T-cell (primary cell): ENCODE measurements at regions of chr10 and their contacts with region 1.

Region 1: GRCh38 chr10:74371696-74372095 is 220.7 kb downstream of the ADK start:
- DNase-seq: no peak
- ATAC-seq: no peak
- H3K4me3 ChIP-seq: no peak overlapping the region
- H3K4me3 Mint-ChIP-seq: no peak overlapping the region
- H3K27ac ChIP-seq: no peak overlapping the region
- H3K27ac Mint-ChIP-seq: no peak overlapping the region
- H3K4me1 ChIP-seq: no peaks in the 10 kb centered on the region
- H3K4me1 Mint-ChIP-seq: peaks cover 0 to 7% (median 3%) of the 10 kb centered on the region in 3 donors
- H3K27me3 ChIP-seq: no peaks in the 10 kb centered on the region
- H3K27me3 Mint-ChIP-seq: no peaks in the 10 kb centered on the region

Region 2: GRCh38 chr10:74118804-74119203 is 252.9 kb before region 1 on chr10:
- CTCF ChIA-PET with region 1: no interaction called
- POLR2A ChIA-PET with region 1: no interaction called
- DNase-seq: no peak
- ATAC-seq: no peak
- H3K4me3 ChIP-seq: no peak overlapping the region
- H3K4me3 Mint-ChIP-seq: no peak overlapping the region
- H3K27ac ChIP-seq: peak overlapping the region; percentile 1
- H3K27ac Mint-ChIP-seq: peak overlapping the region; percentile 74 to 80
- H3K4me1 ChIP-seq: no peaks in the 10 kb centered on the region
- H3K4me1 Mint-ChIP-seq: peaks cover 2 to 17% (median 6%) of the 10 kb centered on the region in 3 donors
- H3K27me3 ChIP-seq: no peaks in the 10 kb centered on the region
- H3K27me3 Mint-ChIP-seq: no peaks in the 10 kb centered on the region

Region 3: DNA sequence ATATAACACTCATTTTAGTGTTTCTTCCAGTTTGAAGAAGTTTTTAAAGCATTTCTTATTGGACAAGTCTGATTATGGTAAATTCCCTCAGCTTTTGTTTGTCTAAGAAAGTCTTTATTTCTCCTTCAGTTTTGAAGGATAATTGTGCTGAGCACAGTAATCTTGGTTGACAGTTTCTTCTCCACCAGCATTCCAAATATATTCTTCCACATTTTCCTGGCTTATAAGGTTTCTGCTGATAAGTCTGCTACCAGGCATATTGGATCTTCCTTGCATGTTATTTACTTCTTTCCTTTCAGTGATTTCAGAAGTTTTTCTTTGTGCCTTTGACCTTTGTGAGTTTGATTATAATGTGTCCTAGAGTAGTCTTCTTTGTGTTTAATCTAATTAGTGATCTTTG is 10.0 kb before region 1 on chr10:
- CTCF ChIA-PET with region 1: no interaction called
- POLR2A ChIA-PET with region 1: no interaction called
- DNase-seq: no peak
- ATAC-seq: no peak
- H3K4me3 ChIP-seq: no peak overlapping the region
- H3K4me3 Mint-ChIP-seq: no peak overlapping the region
- H3K27ac ChIP-seq: no peak overlapping the region
- H3K27ac Mint-ChIP-seq: no peak overlapping the region
- H3K4me1 ChIP-seq: no peaks in the 10 kb centered on the region
- H3K4me1 Mint-ChIP-seq: peaks cover 0 to 7% (median 5%) of the 10 kb centered on the region in 3 donors
- H3K27me3 ChIP-seq: no peaks in the 10 kb centered on the region
- H3K27me3 Mint-ChIP-seq: no peaks in the 10 kb centered on the region

Region 4: GRCh38 chr10:74406006-74406405 is 34.3 kb after region 1 on chr10:
- CTCF ChIA-PET with region 1: no interaction called
- POLR2A ChIA-PET with region 1: no interaction called
- DNase-seq: no peak
- ATAC-seq: no peak
- H3K4me3 ChIP-seq: no peak overlapping the region
- H3K4me3 Mint-ChIP-seq: no peak overlapping the region
- H3K27ac ChIP-seq: no peak overlapping the region
- H3K27ac Mint-ChIP-seq: no peak overlapping the region
- H3K4me1 ChIP-seq: no peaks in the 10 kb centered on the region
- H3K4me1 Mint-ChIP-seq: peaks cover 0 to 5% (median 0%) of the 10 kb centered on the region in 3 donors
- H3K27me3 ChIP-seq: no peaks in the 10 kb centered on the region
- H3K27me3 Mint-ChIP-seq: no peaks in the 10 kb centered on the region

Region 5: DNA sequence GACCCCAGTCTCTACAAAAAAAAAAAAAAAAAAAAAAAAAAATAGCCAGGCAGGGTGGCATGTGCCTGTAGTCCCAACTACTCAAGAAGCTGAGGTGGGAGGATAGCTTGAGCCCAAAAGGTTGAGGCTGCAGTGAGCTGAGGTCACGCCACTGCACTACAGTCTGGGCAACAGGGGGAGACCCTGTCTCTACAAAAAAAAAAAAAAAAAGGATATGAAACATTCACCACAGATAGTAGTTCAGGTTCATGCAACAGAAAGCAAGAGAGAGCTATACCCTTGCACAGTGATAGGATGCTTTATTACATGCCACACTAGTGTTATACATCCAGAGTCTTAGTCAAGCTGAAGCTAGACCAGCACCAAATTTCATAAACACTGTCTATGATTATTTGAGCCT is 306.3 kb after region 1 on chr10:
- CTCF ChIA-PET with region 1: no interaction called
- POLR2A ChIA-PET with region 1: interaction called in 1 of 2 experiments, 11 read pairs
- DNase-seq: no peak
- ATAC-seq: no peak
- H3K4me3 ChIP-seq: no peak overlapping the region
- H3K4me3 Mint-ChIP-seq: no peak overlapping the region
- H3K27ac ChIP-seq: no peak overlapping the region
- H3K27ac Mint-ChIP-seq: no peak overlapping the region
- H3K4me1 ChIP-seq: peaks cover 0 to 4% of the 10 kb centered on the region in 2 experiments
- H3K4me1 Mint-ChIP-seq: peaks cover 17 to 27% (median 22%) of the 10 kb centered on the region in 3 donors
- H3K27me3 ChIP-seq: no peaks in the 10 kb centered on the region
- H3K27me3 Mint-ChIP-seq: no peaks in the 10 kb centered on the region